A549 (cell line): ENCODE measurements at regions of chr5 and their contacts with region 1.

Region 1: DNA sequence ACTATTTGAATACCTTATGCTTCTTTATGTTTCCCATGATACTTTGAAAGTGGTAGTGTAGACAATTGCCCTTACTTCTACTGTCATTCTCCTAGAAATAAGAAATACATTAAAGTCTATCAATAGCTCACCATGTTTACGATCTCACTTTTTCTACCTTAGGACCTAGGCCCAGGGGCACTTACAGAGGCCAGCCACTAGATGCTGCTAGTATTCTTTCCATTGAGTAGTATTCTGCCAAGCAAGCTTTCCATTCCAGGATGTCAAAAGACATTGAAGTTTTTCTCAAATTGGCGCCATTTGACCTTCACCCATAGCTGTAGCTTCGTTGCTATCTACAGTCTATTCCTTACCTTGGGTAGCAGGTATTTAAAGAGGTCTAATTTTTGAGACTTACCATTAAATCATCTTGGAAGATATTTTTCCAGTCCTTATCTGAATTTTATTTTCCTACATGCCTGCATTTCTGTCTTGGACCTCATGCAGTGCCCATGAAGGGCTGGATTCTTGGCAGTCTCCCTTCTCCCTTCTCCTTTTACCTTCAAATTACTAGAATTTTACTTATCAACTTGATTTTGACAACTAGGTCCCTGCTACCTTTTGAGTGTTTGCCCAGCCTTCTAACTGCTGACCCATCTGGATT is 246.0 kb upstream of the NUDT12 start:
- DNase-seq: peak; percentile 40 to 65
- ATAC-seq: peak; percentile 91 to 95
- H3K4me3 ChIP-seq: no peak overlapping the region
- H3K27ac ChIP-seq: no peak overlapping the region
- H3K4me1 ChIP-seq: no peaks in the 10 kb centered on the region
- CTCF ChIP-seq: peak; percentile 89
- EP300 ChIP-seq: no peak
- POLR2A ChIP-seq: no peak
- RAD21 ChIP-seq: peak; percentile 91 to 95

Region 2: GRCh38 chr5:104178829-104179456 is 370.4 kb after region 1 on chr5:
- CTCF ChIA-PET with region 1: interaction called, 14 read pairs
- POLR2A ChIA-PET with region 1: no interaction called
- DNase-seq: peak; percentile 20 to 72
- ATAC-seq: peak in 1 of 2 experiments; percentile 92; a peak in 4 of 6 replicates
- H3K4me3 ChIP-seq: no peak overlapping the region
- H3K27ac ChIP-seq: no peak overlapping the region
- H3K4me1 ChIP-seq: no peaks in the 10 kb centered on the region
- CTCF ChIP-seq: peak; percentile 44
- EP300 ChIP-seq: no peak
- POLR2A ChIP-seq: no peak
- RAD21 ChIP-seq: peak; percentile 64 to 80